ENCODE measurements at regions of chr5 and their contacts with region 1.

Region 1: DNA sequence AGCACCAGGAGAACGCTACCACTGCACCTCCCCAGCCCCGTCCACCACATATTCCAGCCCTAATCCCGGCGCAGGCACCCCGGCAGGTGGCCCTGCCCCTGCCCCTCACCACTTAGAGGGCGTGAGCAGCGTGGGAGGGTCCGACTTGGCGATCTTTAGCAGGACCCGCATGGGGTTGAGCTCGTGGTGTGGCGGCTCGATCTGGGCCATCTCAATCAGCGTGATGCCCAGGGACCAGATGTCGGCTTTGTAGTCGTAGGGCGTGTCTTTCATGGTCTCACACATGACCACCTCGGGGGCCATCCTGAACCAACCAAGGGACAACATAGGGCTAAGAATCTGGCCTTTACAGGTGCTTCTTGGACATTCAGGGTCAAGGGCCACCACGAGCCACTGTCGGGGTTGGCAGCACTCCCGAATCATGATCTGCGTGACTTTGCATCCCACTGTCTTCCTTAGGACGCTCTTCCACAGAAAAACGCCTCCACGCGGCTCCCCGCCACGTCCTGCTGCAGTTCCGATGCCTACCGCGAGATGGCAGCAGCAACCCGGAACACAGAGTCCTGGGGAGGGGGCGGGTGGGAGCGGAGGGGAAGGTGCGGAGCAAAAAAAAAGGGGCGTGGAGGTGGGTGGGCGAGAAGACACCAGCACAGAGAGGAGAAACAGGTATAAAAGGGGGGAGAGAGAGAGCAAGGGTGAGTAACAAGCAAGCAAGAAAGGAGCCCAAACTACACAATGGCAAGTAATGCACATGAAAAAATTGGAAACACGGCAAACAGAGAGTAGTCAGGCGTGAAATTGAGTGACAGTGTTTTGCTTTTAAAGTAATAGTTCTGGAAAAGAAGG is 81.3 kb downstream of the STK10 start:
- DNase-seq: peak; percentile 67 to 82
- ATAC-seq: peak; percentile 40 to 53 (median 43)
- H3K4me3 ChIP-seq: no peak overlapping the region
- H3K4me3 Mint-ChIP-seq: peak overlapping the region; percentile 56
- H3K27ac ChIP-seq: peak overlapping the region; percentile 34
- H3K27ac Mint-ChIP-seq: peak overlapping the region; percentile 78 to 81
- H3K4me1 ChIP-seq: peaks cover 54% of the 10 kb centered on the region
- H3K4me1 Mint-ChIP-seq: peaks cover 42 to 61% of the 10 kb centered on the region in 2 donors
- H3K27me3 ChIP-seq: no peaks in the 10 kb centered on the region
- H3K27me3 Mint-ChIP-seq: no peaks in the 10 kb centered on the region
- CTCF ChIP-seq: peak; percentile 89

Region 2: DNA sequence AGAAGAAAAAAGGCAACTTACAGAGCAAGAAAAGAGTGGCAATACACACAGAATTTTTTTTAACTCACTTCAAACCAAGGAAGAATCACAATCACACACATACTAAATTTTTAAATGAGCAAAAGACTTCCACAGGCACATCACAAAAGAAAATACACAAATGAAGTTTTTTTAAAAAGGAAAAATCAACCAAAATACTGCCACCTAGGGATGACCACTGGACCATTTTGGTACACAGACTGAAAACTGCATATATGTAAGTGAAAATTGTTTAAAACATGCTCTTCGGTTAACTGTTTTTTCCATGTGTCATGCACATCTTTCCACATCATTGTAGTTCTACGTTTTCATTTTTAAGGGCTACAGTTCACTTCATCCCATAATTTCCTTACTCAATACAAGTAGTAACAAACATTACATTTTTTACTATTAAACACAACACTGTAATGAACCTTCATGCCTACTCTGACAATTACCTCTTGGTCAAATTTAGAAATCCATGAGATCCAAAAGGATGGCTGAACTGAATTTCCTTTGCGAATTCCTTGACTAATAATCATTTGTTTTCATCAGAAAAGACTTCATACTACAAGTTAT is 179.3 kb before region 1 on chr5:
- intact Hi-C with region 1: no loop called
- DNase-seq: no peak
- ATAC-seq: no peak
- H3K4me3 ChIP-seq: no peak overlapping the region
- H3K4me3 Mint-ChIP-seq: no peak overlapping the region
- H3K27ac ChIP-seq: no peak overlapping the region
- H3K27ac Mint-ChIP-seq: peak overlapping the region in 1 of 2 donors; percentile 77
- H3K4me1 ChIP-seq: peaks cover 10% of the 10 kb centered on the region
- H3K4me1 Mint-ChIP-seq: peaks cover 60 to 69% of the 10 kb centered on the region in 2 donors
- H3K27me3 ChIP-seq: no peaks in the 10 kb centered on the region
- H3K27me3 Mint-ChIP-seq: no peaks in the 10 kb centered on the region
- CTCF ChIP-seq: no peak

Region 3: DNA sequence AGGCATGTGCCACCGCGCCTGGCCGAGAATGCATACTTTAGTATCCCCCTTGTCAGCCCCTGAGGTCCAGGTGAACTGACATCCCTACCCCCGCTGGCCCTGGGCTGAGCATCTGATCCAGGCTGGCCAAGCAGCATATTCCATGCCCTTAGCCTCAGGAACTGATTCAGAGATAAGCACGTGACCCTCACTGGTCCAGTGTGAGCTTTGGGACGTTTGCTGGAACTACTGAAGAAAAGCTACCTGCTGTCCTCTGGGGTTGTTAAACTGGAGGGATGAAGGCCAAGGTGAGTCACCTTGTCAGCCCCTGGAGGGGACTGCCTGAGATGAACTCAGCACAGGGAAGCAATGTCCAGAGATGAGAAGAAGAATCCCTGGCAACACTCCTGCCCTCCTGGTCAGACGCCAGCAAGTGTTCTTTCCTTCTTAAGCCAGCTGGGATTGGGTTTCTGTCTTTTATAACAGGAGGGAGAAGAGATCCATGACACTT is 41.2 kb before region 1 on chr5:
- intact Hi-C with region 1: loop called (anchors 5 kb)
- DNase-seq: no peak
- ATAC-seq: no peak
- H3K4me3 ChIP-seq: no peak overlapping the region
- H3K4me3 Mint-ChIP-seq: peak overlapping the region; percentile 82
- H3K27ac ChIP-seq: peak overlapping the region; percentile 65
- H3K27ac Mint-ChIP-seq: peak overlapping the region; percentile 92 to 94
- H3K4me1 ChIP-seq: peaks cover 36% of the 10 kb centered on the region
- H3K4me1 Mint-ChIP-seq: peaks cover 60 to 62% of the 10 kb centered on the region in 2 donors
- H3K27me3 ChIP-seq: no peaks in the 10 kb centered on the region
- H3K27me3 Mint-ChIP-seq: no peaks in the 10 kb centered on the region
- CTCF ChIP-seq: no peak

Region 4: DNA sequence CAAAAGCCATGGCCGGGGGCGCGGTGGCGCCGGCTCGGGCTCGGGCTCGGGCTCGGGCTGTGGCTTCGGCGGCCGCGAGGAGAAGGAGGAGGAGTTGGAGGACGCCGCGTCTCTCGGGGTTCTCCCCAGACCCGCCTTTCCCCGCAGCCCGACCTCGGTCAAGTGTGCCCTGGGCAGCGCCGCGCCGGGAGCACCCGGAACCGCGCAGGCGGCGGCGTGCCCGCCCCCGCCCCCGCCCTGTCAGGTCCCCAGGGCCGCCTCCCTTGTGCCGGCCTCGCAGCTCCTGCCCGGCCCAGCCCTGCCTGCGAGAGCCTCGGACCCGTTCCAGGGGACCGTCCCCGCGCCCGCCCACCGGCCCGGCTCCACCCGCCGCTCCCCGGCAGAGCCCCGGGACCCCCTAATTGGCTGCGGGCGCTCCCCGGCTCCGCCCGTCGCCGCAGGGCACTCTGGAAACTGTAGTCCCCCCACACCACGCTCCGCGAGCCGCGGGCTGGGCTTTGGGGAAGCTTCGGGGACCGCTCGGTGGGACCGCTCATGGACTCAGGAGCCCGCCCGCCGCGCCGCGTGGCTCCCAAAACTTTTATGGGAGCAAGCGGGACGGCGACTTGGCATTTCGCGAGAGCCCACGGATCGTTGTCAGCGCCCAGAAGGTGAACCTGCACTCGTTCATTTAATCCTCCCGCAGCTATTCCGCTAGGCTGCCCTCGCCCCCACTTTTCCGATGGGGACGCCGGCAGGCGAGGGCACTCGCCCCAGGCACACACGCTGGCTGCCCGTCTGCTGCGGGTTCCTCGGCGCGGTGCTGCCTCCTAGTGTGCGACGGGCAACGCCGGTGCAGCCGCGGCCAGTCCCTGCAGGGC is 81.5 kb after region 1 on chr5 and contains the start of gene STK10:
- intact Hi-C with region 1: loop called (anchors 1 kb)
- DNase-seq: peak; percentile 87 to 95
- ATAC-seq: peak; percentile 65 to 85 (median 76)
- H3K4me3 ChIP-seq: peak within 1 kb of the TSS; percentile 66
- H3K4me3 Mint-ChIP-seq: peak within 1 kb of the TSS; percentile 98
- H3K27ac ChIP-seq: peak within 1 kb of the TSS; percentile 85
- H3K27ac Mint-ChIP-seq: peak within 1 kb of the TSS; percentile 97 to 98
- H3K4me1 ChIP-seq: peaks cover 30% of the 10 kb centered on the region
- H3K4me1 Mint-ChIP-seq: peaks cover 39 to 40% of the 10 kb centered on the region in 2 donors
- H3K27me3 ChIP-seq: no peaks in the 10 kb centered on the region
- H3K27me3 Mint-ChIP-seq: no peaks in the 10 kb centered on the region
- CTCF ChIP-seq: peak; percentile 86
- total RNA-seq, gene STK10: 705 to 879 (median 783) TPM

Region 5: DNA sequence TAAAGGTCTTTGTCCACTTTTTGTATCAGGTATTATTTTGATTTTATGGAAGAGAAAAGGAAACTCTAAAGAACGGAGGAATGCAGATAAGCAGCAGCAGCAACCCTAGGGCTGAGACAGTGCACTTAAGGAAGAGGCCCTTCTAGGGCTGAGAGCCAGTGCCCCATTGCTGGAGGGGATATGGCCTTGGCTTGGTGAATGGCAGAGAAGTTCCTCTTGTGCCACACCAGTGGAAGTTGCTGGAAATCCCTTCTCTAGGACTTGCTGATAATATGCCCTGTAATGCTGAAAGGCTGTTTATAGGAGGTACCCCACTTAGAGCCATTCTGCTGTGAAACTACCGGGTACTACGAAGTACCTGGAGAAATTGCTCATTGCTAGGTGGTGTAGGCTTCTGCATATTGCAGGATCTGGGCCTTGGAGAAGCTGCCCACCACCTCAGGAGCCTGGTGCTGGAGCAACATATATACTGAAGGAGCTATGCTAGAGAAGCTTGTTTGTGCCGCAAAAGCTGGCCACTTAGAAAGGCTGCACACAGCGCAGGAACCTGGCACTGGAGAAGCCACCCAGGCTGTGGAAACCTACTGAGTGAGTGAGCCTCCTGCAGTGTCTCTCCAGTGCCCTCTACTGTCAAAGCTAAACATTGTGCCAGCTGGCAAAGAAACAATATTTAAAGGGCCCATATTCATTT is 186.5 kb after region 1 on chr5:
- intact Hi-C with region 1: loop called (anchors 1 kb)
- DNase-seq: peak; percentile 22 to 82
- ATAC-seq: peak; percentile 95 to 100 (median 99)
- H3K4me3 ChIP-seq: no peak overlapping the region
- H3K4me3 Mint-ChIP-seq: no peak overlapping the region
- H3K27ac ChIP-seq: no peak overlapping the region
- H3K27ac Mint-ChIP-seq: no peak overlapping the region
- H3K4me1 ChIP-seq: peaks cover 3% of the 10 kb centered on the region
- H3K4me1 Mint-ChIP-seq: peaks cover 0 to 5% of the 10 kb centered on the region in 2 donors
- H3K27me3 ChIP-seq: no peaks in the 10 kb centered on the region
- H3K27me3 Mint-ChIP-seq: no peaks in the 10 kb centered on the region
- CTCF ChIP-seq: peak; percentile 77